ENCODE measurements at regions of chr11 and their contacts with region 1.

Region 1: DNA sequence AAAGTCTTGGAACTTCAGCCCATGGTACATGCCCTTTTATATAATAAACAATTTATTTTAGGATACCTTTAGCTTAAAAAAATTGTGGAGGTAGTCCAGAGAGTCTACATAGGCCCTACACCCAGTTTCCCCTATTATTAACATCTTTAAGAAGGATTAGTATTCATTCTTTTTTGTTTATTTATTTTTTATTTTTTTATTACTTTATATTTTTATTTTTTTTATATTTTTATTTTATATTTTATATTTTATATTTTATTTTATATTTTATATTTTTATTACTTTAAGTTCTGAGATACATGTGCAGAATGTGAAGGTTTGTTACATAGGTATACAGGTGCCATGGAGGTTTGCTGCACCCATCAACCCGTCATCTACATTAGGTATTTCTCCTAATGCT is 15.9 kb upstream of the ABTB2 start:
- DNase-seq: no peak
- H3K4me3 Mint-ChIP-seq: no peak overlapping the region
- H3K27ac Mint-ChIP-seq: no peak overlapping the region
- H3K4me1 Mint-ChIP-seq: peaks cover 13% of the 10 kb centered on the region
- H3K27me3 Mint-ChIP-seq: no peaks in the 10 kb centered on the region
- CTCF ChIP-seq: no peak

Region 2: GRCh38 chr11:34427186-34427805 is 53.6 kb after region 1 on chr11:
- CTCF ChIA-PET with region 1: no interaction called
- POLR2A ChIA-PET with region 1: interaction called, 4 read pairs
- intact Hi-C with region 1: loop called (anchors 5 kb)
- DNase-seq: peak; percentile 86
- H3K4me3 Mint-ChIP-seq: peak overlapping the region; percentile 2
- H3K27ac Mint-ChIP-seq: no peak overlapping the region
- H3K4me1 Mint-ChIP-seq: peaks cover 6% of the 10 kb centered on the region
- H3K27me3 Mint-ChIP-seq: no peaks in the 10 kb centered on the region
- CTCF ChIP-seq: no peak

Measured in MCF 10A (cell line).